Activated CD4-positive, alpha-beta T cell treated with anti-CD3 and anti-CD28 coated beads for 36 hours (primary cell): ENCODE measurements at regions of chr11 and their contacts with region 1.

Region 1: DNA sequence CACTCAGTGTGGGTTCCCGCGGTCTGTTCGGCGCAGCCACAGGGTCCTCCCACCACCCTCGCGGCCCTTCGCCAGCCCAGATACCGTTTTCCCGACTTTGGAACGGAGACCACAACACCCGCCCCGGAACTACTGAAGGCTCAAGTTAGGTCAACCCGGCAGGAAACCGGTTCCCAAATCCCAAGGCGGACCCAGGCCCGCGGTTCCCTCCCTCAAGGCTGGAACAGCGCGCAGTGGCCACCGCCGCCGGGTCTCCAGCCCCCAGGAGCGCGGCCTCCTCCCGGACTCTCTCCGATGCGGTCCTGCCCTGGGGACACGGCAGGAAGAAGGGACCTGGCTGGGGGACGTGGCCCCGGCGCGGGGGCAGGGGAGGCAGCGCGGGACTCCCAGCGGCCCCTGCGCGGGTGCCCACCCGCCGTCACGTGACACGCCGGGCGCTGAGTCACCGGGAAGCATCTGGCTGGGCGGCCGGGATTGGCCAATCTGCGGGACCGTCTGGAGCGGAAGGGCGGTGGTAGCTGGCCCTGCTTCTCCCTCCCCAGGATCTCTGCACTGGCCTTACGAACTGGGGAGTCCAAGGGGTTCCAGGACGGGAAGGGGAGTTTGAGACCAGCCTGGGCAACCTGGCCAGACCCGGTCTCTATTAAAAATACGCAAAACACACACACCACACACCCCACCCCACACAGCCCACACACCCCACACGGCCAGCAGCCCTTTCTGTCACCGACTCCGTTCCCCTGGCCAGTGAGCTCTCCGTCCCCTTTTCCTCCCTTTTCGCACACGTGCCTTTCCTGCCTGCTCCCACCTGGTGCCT is 21.5 kb upstream of the MALAT1 start:
- DNase-seq: peak; percentile 96
- ATAC-seq: peak; percentile 88
- H3K4me3 Mint-ChIP-seq: peak overlapping the region; percentile 97
- H3K27ac Mint-ChIP-seq: peak overlapping the region; percentile 98
- H3K4me1 Mint-ChIP-seq: peaks cover 34% of the 10 kb centered on the region
- H3K27me3 Mint-ChIP-seq: no peaks in the 10 kb centered on the region

Region 2: DNA sequence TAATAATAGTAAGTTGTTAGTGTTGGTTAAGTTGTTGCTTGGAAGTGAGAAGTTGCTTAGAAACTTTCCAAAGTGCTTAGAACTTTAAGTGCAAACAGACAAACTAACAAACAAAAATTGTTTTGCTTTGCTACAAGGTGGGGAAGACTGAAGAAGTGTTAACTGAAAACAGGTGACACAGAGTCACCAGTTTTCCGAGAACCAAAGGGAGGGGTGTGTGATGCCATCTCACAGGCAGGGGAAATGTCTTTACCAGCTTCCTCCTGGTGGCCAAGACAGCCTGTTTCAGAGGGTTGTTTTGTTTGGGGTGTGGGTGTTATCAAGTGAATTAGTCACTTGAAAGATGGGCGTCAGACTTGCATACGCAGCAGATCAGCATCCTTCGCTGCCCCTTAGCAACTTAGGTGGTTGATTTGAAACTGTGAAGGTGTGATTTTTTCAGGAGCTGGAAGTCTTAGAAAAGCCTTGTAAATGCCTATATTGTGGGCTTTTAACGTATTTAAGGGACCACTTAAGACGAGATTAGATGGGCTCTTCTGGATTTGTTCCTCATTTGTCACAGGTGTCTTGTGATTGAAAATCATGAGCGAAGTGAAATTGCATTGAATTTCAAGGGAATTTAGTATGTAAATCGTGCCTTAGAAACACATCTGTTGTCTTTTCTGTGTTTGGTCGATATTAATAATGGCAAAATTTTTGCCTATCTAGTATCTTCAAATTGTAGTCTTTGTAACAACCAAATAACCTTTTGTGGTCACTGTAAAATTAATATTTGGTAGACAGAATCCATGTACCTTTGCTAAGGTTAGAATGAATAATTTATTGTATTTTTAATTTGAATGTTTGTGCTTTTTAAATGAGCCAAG is 52.0 kb before region 1 on chr11:
- CTCF ChIA-PET with region 1: interaction called, 4 read pairs
- POLR2A ChIA-PET with region 1: interaction called, 116 read pairs
- intact Hi-C with region 1: loop called (anchors 1 kb)
- DNase-seq: peak; percentile 87
- ATAC-seq: peak; percentile 18
- H3K4me3 Mint-ChIP-seq: peak overlapping the region; percentile 100
- H3K27ac Mint-ChIP-seq: peak overlapping the region; percentile 99
- H3K4me1 Mint-ChIP-seq: peaks cover 51% of the 10 kb centered on the region
- H3K27me3 Mint-ChIP-seq: peaks cover 6% of the 10 kb centered on the region

Region 3: DNA sequence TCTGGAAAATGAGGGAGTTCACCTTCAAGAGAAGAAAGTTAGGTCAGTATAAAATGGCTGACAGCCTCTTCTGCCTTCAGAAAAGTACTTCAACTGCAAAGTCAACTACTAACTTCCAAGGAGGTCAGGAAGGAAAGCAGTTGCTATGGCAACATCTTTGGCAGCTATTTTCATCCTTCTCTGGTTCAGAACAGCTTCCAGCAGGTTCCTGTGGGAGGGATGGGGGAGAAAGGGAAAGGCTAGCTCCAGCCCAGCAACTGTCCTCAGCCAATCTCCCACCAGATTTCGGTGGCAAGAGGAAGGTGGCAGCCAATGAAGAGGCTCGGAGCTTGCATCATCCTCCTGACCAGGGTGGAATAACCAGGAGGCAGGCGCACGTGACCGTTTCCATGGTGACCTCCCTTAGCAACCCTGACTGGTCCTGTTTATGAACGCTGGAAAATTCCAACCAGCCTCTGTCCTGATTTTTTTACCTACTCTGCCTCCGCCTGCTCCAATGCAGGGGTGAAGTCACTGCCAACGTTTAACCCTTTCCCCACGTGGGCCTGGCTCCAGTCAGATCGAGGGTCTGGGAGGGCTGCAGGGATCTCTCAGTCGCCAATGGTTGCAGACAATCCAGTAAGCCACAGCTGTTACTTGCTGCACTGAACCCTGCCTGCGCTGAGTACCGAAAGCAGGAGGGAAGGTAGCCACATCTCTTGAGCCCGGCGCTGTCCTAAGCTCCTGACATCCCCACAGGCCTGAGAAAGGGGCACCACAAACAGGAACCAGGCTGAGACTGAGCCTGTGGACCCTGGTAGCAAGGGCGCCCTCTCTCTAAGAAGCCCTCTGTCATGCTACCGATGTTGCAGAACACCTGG is 10.3 kb after region 1 on chr11:
- CTCF ChIA-PET with region 1: interaction called, 72 read pairs
- POLR2A ChIA-PET with region 1: interaction called, 58 read pairs
- intact Hi-C with region 1: loop called in 1 of 2 experiments (anchors 1 kb)
- DNase-seq: peak; percentile 88
- ATAC-seq: peak; percentile 76
- H3K4me3 Mint-ChIP-seq: peak overlapping the region; percentile 42
- H3K27ac Mint-ChIP-seq: peak overlapping the region; percentile 88
- H3K4me1 Mint-ChIP-seq: peaks cover 59% of the 10 kb centered on the region
- H3K27me3 Mint-ChIP-seq: no peaks in the 10 kb centered on the region

Region 4: DNA sequence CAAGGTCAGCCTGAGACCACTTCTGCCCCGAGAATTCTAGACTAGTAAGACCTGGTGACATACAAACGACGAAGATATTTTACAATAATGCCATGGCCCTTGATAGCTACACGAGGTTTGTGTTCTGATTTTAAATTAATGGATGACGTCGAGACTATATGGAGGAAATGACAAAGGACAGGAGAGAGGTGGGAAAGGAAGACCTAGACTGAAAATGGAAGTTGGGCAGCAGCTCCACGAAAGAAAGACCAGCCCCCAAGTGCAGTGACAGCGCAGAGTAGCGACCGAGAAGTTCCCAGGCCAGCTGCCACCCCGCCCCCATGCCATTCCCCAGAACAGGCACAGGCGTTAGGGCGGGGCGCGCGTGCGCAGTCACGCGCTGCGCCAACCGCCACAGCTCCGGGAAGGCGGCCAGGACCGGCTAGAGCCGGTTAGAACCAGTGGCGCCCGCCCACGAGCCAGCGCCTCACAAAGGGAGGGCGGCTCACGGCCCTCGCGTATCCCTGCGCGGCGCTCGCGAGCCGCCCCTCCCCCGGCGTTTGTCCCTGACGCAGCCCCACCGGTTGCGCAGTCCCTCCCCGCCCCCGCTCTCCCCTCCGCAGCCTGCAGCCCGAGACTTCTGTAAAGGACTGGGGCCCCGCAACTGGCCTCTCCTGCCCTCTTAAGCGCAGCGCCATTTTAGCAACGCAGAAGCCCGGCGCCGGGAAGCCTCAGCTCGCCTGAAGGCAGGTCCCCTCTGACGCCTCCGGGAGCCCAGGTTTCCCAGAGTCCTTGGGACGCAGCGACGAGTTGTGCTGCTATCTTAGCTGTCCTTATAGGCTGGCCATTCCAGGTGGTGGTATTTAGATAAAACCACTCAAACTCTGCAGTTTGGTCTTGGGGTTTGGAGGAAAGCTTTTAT is 20.0 kb after region 1 on chr11:
- CTCF ChIA-PET with region 1: interaction called, 72 read pairs
- POLR2A ChIA-PET with region 1: interaction called, 180 read pairs
- intact Hi-C with region 1: loop called (anchors 1 kb)
- DNase-seq: peak; percentile 100
- ATAC-seq: peak; percentile 70
- H3K4me3 Mint-ChIP-seq: no peak overlapping the region
- H3K27ac Mint-ChIP-seq: peak overlapping the region; percentile 96
- H3K4me1 Mint-ChIP-seq: peaks cover 41% of the 10 kb centered on the region
- H3K27me3 Mint-ChIP-seq: no peaks in the 10 kb centered on the region

Region 5: DNA sequence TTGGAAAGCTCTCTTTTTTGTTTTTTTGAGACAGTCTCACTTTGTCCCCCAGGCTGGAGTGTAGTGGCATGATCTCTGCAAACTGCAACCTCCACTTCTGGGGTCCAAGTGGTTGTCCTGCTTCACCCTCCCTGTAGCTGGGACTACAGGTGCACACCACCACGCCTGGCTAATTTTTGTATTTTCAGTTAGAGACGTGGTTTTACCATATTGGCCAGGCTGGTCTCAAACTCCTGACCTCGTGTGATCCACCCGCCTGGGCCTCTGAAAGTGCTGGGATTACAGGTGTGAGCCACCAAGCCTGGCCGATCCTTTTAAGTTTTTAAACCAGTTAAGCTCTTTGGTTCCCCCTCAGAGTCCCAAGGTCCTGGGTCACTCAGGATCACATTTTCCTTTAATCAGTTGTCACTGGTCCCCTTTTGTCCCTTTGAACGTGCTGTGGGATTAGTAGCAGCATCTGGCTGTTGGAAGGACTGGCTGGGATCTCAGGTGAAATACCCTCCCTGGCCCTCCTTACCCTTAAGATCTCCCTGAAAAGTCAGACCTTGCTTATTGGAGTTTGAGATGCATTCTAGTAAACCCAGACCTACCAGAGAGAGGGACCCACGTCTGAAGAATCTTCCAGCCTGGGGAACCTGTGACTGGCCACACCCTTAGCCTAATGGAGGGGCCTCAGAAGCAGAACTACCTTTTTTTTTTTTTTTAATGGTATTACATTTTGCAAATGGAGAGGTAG is 29.6 kb after region 1 on chr11:
- CTCF ChIA-PET with region 1: interaction called, 13 read pairs
- POLR2A ChIA-PET with region 1: interaction called, 153 read pairs
- intact Hi-C with region 1: loop called in 1 of 2 experiments (anchors 1 kb)
- DNase-seq: peak; percentile 75
- ATAC-seq: peak; percentile 51
- H3K4me3 Mint-ChIP-seq: no peak overlapping the region
- H3K27ac Mint-ChIP-seq: no peak overlapping the region
- H3K4me1 Mint-ChIP-seq: peaks cover 60% of the 10 kb centered on the region
- H3K27me3 Mint-ChIP-seq: no peaks in the 10 kb centered on the region